Mammary epithelial cell (primary cell): ENCODE measurements at regions of chr3 and their contacts with region 1.

Region 1: GRCh38 chr3:160003520-160004128 is 15.0 kb downstream of the IL12A start:
- DNase-seq: peak; percentile 41
- H3K4me3 ChIP-seq: no peak overlapping the region
- H3K27ac ChIP-seq: no peak overlapping the region
- H3K4me1 ChIP-seq: no peaks in the 10 kb centered on the region
- H3K27me3 ChIP-seq: no peaks in the 10 kb centered on the region
- CTCF ChIP-seq: peak; percentile 44 to 69

Region 2: DNA sequence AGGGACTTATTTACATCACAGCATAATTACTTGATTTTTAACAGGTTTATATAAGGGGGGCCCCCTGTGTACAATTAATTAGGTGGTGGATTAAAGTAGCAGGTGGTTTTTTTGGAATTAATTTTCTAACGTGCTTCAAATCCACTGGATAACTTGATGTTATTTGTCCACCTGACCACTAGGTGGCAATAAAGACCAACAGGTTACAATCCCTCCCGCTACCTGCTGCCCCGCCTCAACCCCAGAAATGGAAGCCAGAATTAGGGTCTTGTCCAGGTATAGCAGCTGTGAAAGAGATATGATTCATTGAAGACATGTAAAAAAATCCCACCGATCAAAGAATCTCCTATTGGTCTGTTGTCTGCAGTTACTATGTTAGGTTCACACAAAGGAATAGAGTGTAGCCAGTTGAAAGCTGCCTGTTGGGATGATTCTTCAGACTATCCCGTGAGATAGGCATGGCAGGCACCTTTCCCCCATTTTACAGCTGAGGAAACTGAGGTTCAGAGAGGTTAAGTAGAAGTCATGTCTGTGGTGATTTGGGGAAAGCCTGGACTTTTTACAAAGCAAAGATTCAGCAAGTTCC is 1157.8 kb before region 1 on chr3:
- CTCF ChIA-PET with region 1: no interaction called
- dilution Hi-C with region 1: no loop called
- in situ Hi-C with region 1: no loop called
- intact Hi-C with region 1: loop called (anchors 10 kb)
- DNase-seq: no peak
- H3K4me3 ChIP-seq: no peak overlapping the region
- H3K27ac ChIP-seq: no peak overlapping the region
- H3K4me1 ChIP-seq: no peaks in the 10 kb centered on the region
- H3K27me3 ChIP-seq: peaks cover 2% of the 10 kb centered on the region
- CTCF ChIP-seq: peak; percentile 52 to 69

Region 3: GRCh38 chr3:159322322-159322939 is 681.2 kb before region 1 on chr3:
- CTCF ChIA-PET with region 1: no interaction called
- dilution Hi-C with region 1: no loop called
- in situ Hi-C with region 1: no loop called
- intact Hi-C with region 1: loop called (anchors 5 kb)
- DNase-seq: no peak
- H3K4me3 ChIP-seq: no peak overlapping the region
- H3K27ac ChIP-seq: no peak overlapping the region
- H3K4me1 ChIP-seq: peaks cover 5% of the 10 kb centered on the region
- H3K27me3 ChIP-seq: no peaks in the 10 kb centered on the region
- CTCF ChIP-seq: peak; percentile 74 to 80

Region 4: GRCh38 chr3:159616212-159616825 is 387.3 kb before region 1 on chr3:
- CTCF ChIA-PET with region 1: no interaction called
- dilution Hi-C with region 1: no loop called
- in situ Hi-C with region 1: loop called (anchors 10 to 25 kb)
- intact Hi-C with region 1: loop called (anchors 1 kb)
- DNase-seq: peak; percentile 48
- H3K4me3 ChIP-seq: no peak overlapping the region
- H3K27ac ChIP-seq: no peak overlapping the region
- H3K4me1 ChIP-seq: peaks cover 14% of the 10 kb centered on the region
- H3K27me3 ChIP-seq: no peaks in the 10 kb centered on the region
- CTCF ChIP-seq: peak; percentile 49 to 70

Region 5: GRCh38 chr3:159672728-159673688 is 330.6 kb before region 1 on chr3:
- CTCF ChIA-PET with region 1: no interaction called
- dilution Hi-C with region 1: no loop called
- in situ Hi-C with region 1: no loop called
- intact Hi-C with region 1: no loop called
- DNase-seq: no peak
- H3K4me3 ChIP-seq: no peak overlapping the region
- H3K27ac ChIP-seq: no peak overlapping the region
- H3K4me1 ChIP-seq: peaks cover 15% of the 10 kb centered on the region
- H3K27me3 ChIP-seq: no peaks in the 10 kb centered on the region
- CTCF ChIP-seq: peak; percentile 1 to 17

Region 6: DNA sequence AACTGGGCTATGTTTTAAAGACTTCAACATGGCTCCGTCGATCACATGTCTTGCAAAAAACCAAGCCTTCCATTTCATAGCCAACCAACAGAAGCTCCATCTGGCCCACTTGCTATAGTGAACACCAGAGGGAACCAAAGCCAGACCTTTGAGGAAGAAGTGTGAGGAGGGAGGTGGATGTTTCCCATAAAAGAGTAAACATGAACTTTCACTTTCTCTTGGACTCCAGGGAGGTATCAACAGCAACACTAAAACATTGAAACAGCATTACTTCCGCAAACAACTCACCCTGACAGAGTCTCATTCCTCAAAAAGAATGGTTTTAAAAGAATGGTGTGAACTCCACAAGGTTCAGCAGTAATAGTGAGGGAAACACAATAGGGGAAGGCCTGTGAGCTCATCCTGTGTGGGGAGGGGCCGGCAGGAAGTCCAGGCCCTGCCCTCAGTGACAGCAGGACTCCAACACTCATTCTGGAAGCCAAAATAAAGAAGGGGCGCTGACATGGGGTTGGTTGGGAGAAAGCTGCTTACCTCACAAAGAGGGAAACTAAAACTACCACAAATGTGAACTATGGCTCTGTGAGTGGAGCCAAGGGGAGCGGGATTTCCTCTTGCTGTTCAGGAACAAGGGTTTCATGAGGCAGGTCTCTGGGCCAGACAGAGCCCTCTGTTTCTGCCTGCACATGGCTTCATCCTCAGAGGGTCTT is 74.0 kb before region 1 on chr3:
- CTCF ChIA-PET with region 1: no interaction called
- dilution Hi-C with region 1: no loop called
- in situ Hi-C with region 1: no loop called
- intact Hi-C with region 1: loop called (anchors 1 kb)
- DNase-seq: peak; percentile 50
- H3K4me3 ChIP-seq: no peak overlapping the region
- H3K27ac ChIP-seq: peak overlapping the region; percentile 85
- H3K4me1 ChIP-seq: peaks cover 28% of the 10 kb centered on the region
- H3K27me3 ChIP-seq: no peaks in the 10 kb centered on the region
- CTCF ChIP-seq: peak; percentile 20 to 24